Left cardiac atrium (tissue), 4 donors: ENCODE measurements at regions of chr7 and their contacts with region 1.

Region 1: DNA sequence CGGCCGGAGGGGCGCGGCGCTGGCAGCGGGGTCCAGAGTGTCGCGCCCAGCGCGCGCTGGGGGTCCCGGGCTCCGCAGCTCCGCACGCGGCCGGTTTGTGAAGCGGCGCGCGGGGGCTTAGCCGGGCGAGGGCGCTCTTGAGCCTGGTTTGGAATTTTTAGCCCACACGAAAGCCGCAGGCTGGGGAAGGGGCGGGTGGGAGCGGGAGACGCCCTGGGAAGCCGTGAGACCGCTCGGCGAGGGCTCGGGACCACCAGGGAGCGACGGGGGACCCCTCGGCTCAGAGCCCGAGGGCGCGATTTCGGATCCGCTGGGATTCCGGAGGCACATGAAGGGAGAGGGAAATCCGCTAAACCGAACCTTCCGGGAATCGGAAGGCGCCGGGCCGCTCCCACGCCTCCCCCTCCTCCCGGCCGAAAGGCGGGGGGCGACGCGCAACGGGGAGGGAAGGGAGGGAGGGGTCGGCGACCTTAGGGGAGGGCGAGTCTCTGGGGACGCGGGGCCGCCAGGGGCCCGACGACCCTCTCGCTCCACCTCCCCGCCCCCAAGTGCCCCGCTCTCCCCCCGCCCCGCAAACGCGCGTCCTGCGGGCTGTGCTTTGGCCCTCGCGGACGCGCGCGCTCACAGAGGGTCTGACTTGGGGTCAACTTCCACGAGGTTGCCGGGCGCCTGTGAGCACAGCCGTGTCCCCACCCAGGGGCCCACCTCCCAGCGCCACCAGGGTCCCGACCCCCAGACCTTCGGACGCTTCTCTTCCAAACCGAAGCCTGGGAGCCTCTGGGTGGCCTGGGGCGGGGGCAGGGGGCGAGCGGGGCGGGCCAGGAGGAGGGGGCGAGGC is 5.1 kb upstream of the ELFN1 start:
- DNase-seq: peak; percentile 74
- ATAC-seq: peak; percentile 50 to 67

Region 2: GRCh38 chr7:1758028-1758858 is 93.3 kb after region 1 on chr7:
- intact Hi-C with region 1: loop called (anchors 2 to 10 kb)
- DNase-seq: peak; percentile 47
- ATAC-seq: peak; percentile 57 to 88

Region 3: GRCh38 chr7:2104107-2104710 is 439.3 kb after region 1 on chr7:
- intact Hi-C with region 1: loop called in 1 of 2 experiments (anchors 10 kb)
- DNase-seq: peak; percentile 90
- ATAC-seq: peak; percentile 85

Region 4: GRCh38 chr7:2209146-2209960 is 544.4 kb after region 1 on chr7:
- intact Hi-C with region 1: loop called (anchors 10 kb)
- DNase-seq: peak; percentile 78
- ATAC-seq: peak; percentile 65 to 85